ENCODE measurements at regions of chr5 and their contacts with region 1.

Region 1: GRCh38 chr5:38809388-38810359 is 36.1 kb upstream of the OSMR start:
- DNase-seq: peak; percentile 86
- H3K4me3 Mint-ChIP-seq: no peak overlapping the region
- H3K27ac Mint-ChIP-seq: no peak overlapping the region
- H3K4me1 Mint-ChIP-seq: peaks cover 18% of the 10 kb centered on the region
- H3K27me3 Mint-ChIP-seq: peaks cover 12% of the 10 kb centered on the region

Region 2: DNA sequence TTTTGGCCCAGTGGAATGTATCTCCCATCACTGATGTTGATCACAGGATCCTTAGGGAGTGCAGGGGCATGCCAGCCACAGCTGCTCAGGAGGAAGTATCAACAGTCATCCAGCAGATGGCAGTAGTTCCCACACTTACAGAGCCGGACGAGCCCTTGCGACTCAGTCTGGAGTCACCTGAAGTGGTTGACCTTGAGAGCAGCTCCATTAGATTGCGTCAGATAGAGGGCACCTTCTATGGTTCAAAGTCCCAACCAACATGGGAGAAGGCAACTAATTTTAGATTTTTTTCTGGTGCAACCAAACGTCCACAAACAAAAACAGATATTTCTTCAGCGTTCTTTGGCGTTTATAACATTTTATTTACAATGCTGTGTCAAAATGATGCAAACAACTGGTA is 426.8 kb before region 1 on chr5:
- intact Hi-C with region 1: loop called (anchors 1 kb)
- DNase-seq: peak; percentile 85
- H3K4me3 Mint-ChIP-seq: no peak overlapping the region
- H3K27ac Mint-ChIP-seq: no peak overlapping the region
- H3K4me1 Mint-ChIP-seq: no peaks in the 10 kb centered on the region
- H3K27me3 Mint-ChIP-seq: peaks cover 24% of the 10 kb centered on the region

Region 3: GRCh38 chr5:38420691-38421390 is 388.8 kb before region 1 on chr5:
- intact Hi-C with region 1: loop called (anchors 5 kb)
- DNase-seq: peak; percentile 78
- H3K4me3 Mint-ChIP-seq: no peak overlapping the region
- H3K27ac Mint-ChIP-seq: no peak overlapping the region
- H3K4me1 Mint-ChIP-seq: no peaks in the 10 kb centered on the region
- H3K27me3 Mint-ChIP-seq: peaks cover 22% of the 10 kb centered on the region

Region 4: GRCh38 chr5:38556599-38557305 is 252.9 kb before region 1 on chr5 and contains the start of gene LIFR:
- intact Hi-C with region 1: loop called (anchors 5 kb)
- DNase-seq: peak; percentile 87
- H3K4me3 Mint-ChIP-seq: peak within 1 kb of the TSS; percentile 88
- H3K27ac Mint-ChIP-seq: peak within 1 kb of the TSS; percentile 67
- H3K4me1 Mint-ChIP-seq: peaks cover 7% of the 10 kb centered on the region
- H3K27me3 Mint-ChIP-seq: peaks cover 66% of the 10 kb centered on the region
- total RNA-seq, gene LIFR: 0.12 TPM in 2 replicates

Region 5: DNA sequence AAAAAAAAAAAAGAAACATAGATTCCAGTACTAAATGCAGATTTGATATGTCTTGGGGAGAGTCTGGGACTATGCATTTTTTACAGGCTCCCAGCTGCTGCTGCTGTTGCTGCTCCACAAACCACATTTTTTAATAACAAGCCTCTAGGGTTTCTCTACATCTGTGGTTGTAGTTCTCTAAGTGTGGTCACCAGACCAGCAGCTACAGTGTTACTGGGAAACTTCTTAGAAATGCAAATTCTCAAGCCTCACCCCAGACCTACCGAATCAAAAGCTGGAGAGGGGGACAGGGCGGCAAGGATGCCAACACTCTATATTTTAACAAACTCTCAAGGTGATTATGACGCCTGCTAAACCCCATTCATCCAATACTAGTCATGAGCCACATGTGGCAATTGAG is 1576.6 kb after region 1 on chr5:
- intact Hi-C with region 1: no loop called
- DNase-seq: peak; percentile 80
- H3K4me3 Mint-ChIP-seq: peak overlapping the region; percentile 43
- H3K27ac Mint-ChIP-seq: peak overlapping the region; percentile 86
- H3K4me1 Mint-ChIP-seq: peaks cover 78% of the 10 kb centered on the region
- H3K27me3 Mint-ChIP-seq: no peaks in the 10 kb centered on the region